ENCODE measurements at regions of chr12 and their contacts with region 1.

Region 1: GRCh38 chr12:24991209-24992049 is 42.5 kb upstream of the BCAT1 start:
- DNase-seq: no peak
- H3K4me3 Mint-ChIP-seq: no peak overlapping the region
- H3K27ac Mint-ChIP-seq: no peak overlapping the region
- H3K4me1 Mint-ChIP-seq: peaks cover 4% of the 10 kb centered on the region
- H3K27me3 Mint-ChIP-seq: peaks cover 2% of the 10 kb centered on the region

Region 2: DNA sequence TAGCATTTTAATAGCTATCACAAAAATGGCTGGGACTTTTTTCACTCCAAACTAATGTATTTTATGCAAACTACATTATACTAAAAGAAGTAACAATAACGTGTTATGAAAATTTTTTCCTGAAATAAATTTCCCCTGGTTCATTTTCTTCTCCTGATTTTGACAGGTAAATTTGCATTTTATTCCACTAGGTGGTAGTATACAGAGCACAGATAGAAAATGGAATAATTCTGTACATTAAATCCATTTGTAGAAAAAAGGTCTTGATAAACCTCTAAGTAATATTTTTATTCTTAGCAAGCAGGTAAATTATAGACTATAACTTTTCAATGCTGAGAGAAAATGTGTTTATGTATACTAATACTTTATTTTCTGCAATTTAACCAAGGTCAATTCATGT is 139.0 kb before region 1 on chr12:
- CTCF ChIA-PET with region 1: interaction called, 19 read pairs
- POLR2A ChIA-PET with region 1: no interaction called
- intact Hi-C with region 1: no loop called
- DNase-seq: no peak
- H3K4me3 Mint-ChIP-seq: no peak overlapping the region
- H3K27ac Mint-ChIP-seq: no peak overlapping the region
- H3K4me1 Mint-ChIP-seq: peaks cover 16% of the 10 kb centered on the region
- H3K27me3 Mint-ChIP-seq: peaks cover 14% of the 10 kb centered on the region

Region 3: DNA sequence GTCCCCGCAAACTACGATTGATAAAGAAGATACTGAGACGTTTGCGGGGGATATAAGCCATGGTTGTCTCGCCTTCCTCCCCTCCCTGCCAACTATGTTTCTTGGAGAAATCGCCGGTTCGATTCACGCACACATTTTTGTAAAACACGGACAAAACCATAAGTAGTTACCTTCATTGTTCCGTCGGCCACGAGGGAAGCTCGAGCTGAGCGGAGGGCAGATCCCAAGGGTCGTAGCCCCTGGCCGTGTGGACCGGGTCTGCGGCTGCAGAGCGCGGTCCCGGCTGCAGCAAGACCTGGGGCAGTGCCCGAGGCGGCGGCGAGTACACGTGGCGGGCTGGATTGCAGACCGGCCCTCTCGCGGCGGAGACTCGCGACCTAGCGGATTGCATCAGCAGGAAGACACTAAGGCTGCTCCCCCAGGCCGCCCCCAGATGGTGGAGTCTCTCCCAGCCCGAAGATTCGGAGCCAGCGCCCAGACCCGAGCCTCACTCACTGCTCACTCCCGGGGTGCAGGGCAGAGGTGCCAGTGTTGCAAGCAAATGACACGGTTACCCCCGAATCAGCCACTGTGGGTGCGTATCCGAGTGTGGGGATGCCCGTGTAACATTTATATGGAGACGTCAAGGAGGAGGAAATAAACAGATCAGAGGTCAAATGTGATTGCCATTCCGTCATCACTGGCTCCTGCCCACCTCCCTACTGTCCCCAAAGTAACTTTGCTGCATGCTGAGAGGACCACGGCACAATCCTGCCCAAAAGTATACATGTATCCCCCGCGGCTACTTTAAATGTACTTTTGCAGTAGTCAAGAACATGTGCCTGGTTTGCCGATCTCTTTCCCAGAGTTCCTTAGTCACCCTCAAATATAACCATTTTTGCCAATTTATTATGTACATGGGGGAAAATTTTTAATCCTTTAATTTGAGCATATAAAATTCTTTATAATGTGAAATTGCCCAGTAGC is 42.4 kb before region 1 on chr12 and contains the start of gene BCAT1:
- CTCF ChIA-PET with region 1: no interaction called
- POLR2A ChIA-PET with region 1: no interaction called
- intact Hi-C with region 1: no loop called
- DNase-seq: peak; percentile 53
- H3K4me3 Mint-ChIP-seq: peak within 1 kb of the TSS; percentile 78
- H3K27ac Mint-ChIP-seq: peak within 1 kb of the TSS; percentile 53
- H3K4me1 Mint-ChIP-seq: peaks cover 34% of the 10 kb centered on the region
- H3K27me3 Mint-ChIP-seq: peaks cover 54% of the 10 kb centered on the region
- total RNA-seq, gene BCAT1: 17.6 to 20.4 TPM

Region 4: GRCh38 chr12:24960222-24960855 is 31.1 kb before region 1 on chr12:
- CTCF ChIA-PET with region 1: interaction called, 5 read pairs
- POLR2A ChIA-PET with region 1: no interaction called
- intact Hi-C with region 1: loop called (anchors 2 kb)
- DNase-seq: peak; percentile 71
- H3K4me3 Mint-ChIP-seq: no peak overlapping the region
- H3K27ac Mint-ChIP-seq: no peak overlapping the region
- H3K4me1 Mint-ChIP-seq: peaks cover 14% of the 10 kb centered on the region
- H3K27me3 Mint-ChIP-seq: peaks cover 10% of the 10 kb centered on the region

Region 5: DNA sequence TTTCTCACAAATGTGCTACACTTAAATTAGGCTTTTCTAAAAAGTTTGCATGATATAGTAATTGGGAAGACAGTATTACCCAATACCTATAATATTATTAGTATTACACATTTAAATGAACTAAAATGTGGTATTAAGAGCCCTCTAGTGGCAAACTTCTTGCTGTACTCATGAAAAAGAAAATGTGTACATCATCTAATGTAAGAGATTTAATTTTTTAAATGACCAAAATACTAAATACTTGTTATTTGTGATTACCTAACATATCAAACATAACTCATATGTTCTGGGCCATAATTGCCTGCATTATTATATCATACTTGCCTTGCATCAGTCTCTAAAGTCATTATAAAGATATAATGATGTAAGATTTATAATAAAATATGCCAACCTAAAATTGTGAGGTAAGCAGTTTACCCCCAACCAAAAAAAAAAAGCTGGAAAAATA is 139.3 kb after region 1 on chr12:
- CTCF ChIA-PET with region 1: interaction called, 120 read pairs
- POLR2A ChIA-PET with region 1: no interaction called
- intact Hi-C with region 1: loop called (anchors 1 kb)
- DNase-seq: no peak
- H3K4me3 Mint-ChIP-seq: no peak overlapping the region
- H3K27ac Mint-ChIP-seq: no peak overlapping the region
- H3K4me1 Mint-ChIP-seq: no peaks in the 10 kb centered on the region
- H3K27me3 Mint-ChIP-seq: no peaks in the 10 kb centered on the region

Region 6: GRCh38 chr12:25151476-25151875 is 160.0 kb after region 1 on chr12:
- CTCF ChIA-PET with region 1: interaction called, 48 read pairs
- POLR2A ChIA-PET with region 1: no interaction called
- intact Hi-C with region 1: loop called (anchors 1 kb)
- DNase-seq: no peak
- H3K4me3 Mint-ChIP-seq: no peak overlapping the region
- H3K27ac Mint-ChIP-seq: no peak overlapping the region
- H3K4me1 Mint-ChIP-seq: peaks cover 8% of the 10 kb centered on the region
- H3K27me3 Mint-ChIP-seq: no peaks in the 10 kb centered on the region

Region 7: GRCh38 chr12:25250744-25251730 is 259.6 kb after region 1 on chr12 and contains the start of gene KRAS:
- CTCF ChIA-PET with region 1: no interaction called
- POLR2A ChIA-PET with region 1: no interaction called
- intact Hi-C with region 1: loop called (anchors 10 kb)
- DNase-seq: peak; percentile 92
- H3K4me3 Mint-ChIP-seq: peak within 1 kb of the TSS; percentile 91
- H3K27ac Mint-ChIP-seq: peak within 1 kb of the TSS; percentile 82
- H3K4me1 Mint-ChIP-seq: peaks cover 30% of the 10 kb centered on the region
- H3K27me3 Mint-ChIP-seq: no peaks in the 10 kb centered on the region
- total RNA-seq, gene KRAS: 15.9 to 17.8 TPM

Region 8: GRCh38 chr12:25386831-25387731 is 395.7 kb after region 1 on chr12:
- CTCF ChIA-PET with region 1: interaction called, 20 read pairs
- POLR2A ChIA-PET with region 1: no interaction called
- intact Hi-C with region 1: loop called (anchors 1 kb)
- DNase-seq: peak; percentile 82
- H3K4me3 Mint-ChIP-seq: peak overlapping the region; percentile 86
- H3K27ac Mint-ChIP-seq: peak overlapping the region; percentile 95
- H3K4me1 Mint-ChIP-seq: peaks cover 44% of the 10 kb centered on the region
- H3K27me3 Mint-ChIP-seq: no peaks in the 10 kb centered on the region